Aorta (tissue), 5 donors: ENCODE measurements at regions of chr2 and their contacts with region 1.

Region 1: GRCh38 chr2:75146606-75147332 is 52.6 kb downstream of the TACR1 start:
- DNase-seq: peak in 1 of 2 donors; percentile 58
- ATAC-seq: peak; percentile 50
- H3K4me3 ChIP-seq: no peak overlapping the region
- H3K27ac ChIP-seq: no peak overlapping the region
- H3K4me1 ChIP-seq: peaks cover 0 to 4% of the 10 kb centered on the region in 2 donors
- H3K27me3 ChIP-seq: no peaks in the 10 kb centered on the region

Region 2: GRCh38 chr2:74845217-74846011 is 301.4 kb before region 1 on chr2:
- intact Hi-C with region 1: loop called in 1 of 2 experiments (anchors 5 kb)
- DNase-seq: peak; percentile 93 to 94
- ATAC-seq: peak; percentile 89
- H3K4me3 ChIP-seq: no peak overlapping the region
- H3K27ac ChIP-seq: peak overlapping the region; percentile 7 to 84
- H3K4me1 ChIP-seq: peaks cover 2 to 6% of the 10 kb centered on the region in 2 donors
- H3K27me3 ChIP-seq: no peaks in the 10 kb centered on the region

Region 3: DNA sequence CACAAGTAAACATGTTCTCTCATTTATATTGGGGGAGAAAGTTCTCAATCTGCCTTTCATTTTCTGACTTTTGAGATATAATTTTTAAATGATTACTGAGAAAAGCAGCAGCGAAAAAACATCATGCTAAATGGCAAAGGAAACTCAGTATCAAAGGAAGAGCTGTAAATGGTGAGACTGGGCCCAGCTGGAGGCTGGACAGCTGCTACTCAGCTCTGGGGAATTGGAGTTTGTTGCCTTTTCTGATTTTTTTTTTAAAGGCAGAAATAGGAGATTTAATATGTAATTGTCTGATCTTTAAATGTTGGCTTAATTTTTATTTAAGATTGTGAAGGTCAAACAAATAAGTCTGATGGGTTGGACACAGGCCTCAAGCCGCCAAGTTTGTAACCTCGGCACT is 189.7 kb after region 1 on chr2:
- intact Hi-C with region 1: no loop called
- DNase-seq: no peak
- ATAC-seq: no peak
- H3K4me3 ChIP-seq: no peak overlapping the region
- H3K27ac ChIP-seq: no peak overlapping the region
- H3K4me1 ChIP-seq: no peaks in the 10 kb centered on the region
- H3K27me3 ChIP-seq: no peaks in the 10 kb centered on the region